Panc1 (cell line): ENCODE measurements at regions of chr17 and their contacts with region 1.

Region 1: GRCh38 chr17:27601069-27601975 is 29.7 kb upstream of the LGALS9 start:
- DNase-seq: peak; percentile 53
- ATAC-seq: no peak
- H3K4me3 ChIP-seq: no peak overlapping the region
- H3K27ac ChIP-seq: no peak overlapping the region
- H3K4me1 ChIP-seq: no peaks in the 10 kb centered on the region
- H3K27me3 ChIP-seq: no peaks in the 10 kb centered on the region
- CTCF ChIP-seq: peak; percentile 92

Region 2: DNA sequence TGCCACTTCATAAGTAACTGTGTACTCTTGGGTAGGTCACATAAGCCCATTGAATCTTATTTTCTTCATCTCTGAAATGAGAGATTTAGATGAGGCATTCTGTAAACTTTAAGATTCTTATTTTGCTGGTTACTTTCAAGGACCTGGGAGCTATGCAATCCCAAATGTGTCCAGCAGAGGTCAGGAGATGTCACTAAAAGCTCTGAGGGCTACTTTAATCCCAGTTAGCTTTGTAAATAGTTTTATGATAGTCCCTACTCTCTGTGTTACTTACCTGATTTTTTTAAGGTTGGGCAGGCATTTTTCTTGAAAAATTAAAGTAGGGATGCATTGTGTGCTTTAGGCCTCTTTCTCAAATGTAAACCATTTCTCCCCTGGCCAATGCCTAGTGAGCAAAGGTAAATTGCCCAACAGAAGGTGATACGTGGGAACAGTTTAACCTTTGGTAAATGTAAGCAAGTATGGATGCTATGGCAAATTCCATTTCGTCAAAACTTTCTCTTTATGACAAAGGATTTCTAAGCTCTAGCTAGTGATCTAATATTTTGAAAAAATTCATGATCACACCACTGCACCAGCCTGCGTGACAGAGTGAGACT is 364.5 kb before region 1 on chr17:
- CTCF ChIA-PET with region 1: interaction called, 20 read pairs
- POLR2A ChIA-PET with region 1: no interaction called
- in situ Hi-C with region 1: no loop called
- intact Hi-C with region 1: no loop called
- DNase-seq: peak; percentile 72
- ATAC-seq: peak; percentile 84
- H3K4me3 ChIP-seq: no peak overlapping the region
- H3K27ac ChIP-seq: no peak overlapping the region
- H3K4me1 ChIP-seq: peaks cover 5% of the 10 kb centered on the region; the same call in 1 of the 2 replicates
- H3K27me3 ChIP-seq: no peaks in the 10 kb centered on the region
- CTCF ChIP-seq: peak; percentile 81; the same call in 1 of the 2 replicates

Region 3: DNA sequence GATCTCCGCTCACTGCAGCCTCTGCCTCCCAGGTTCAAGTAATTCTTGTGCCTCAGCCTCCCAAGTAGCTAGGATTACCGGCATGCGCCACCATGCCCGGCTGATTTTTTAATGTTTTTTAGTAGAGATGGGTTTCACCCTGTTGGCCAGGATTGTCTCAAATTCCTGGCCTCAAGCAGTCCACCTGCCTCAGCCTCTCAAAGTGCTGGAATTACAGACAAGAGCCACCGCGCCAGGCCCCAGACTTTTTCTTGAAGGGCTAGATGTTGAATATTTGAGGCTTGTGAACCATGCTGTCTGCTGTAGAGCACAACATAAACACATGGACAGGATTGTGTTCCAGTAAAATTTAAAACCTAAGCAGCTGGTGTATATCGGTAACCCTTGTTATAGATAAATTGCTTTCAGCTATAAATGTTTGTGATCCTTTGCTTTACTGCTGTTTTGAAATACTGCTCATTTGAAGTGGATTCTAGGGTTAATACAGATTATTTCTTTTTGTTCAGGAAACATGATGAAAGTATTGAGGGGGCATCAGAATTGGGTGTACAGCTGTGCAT is 295.0 kb before region 1 on chr17:
- CTCF ChIA-PET with region 1: no interaction called
- POLR2A ChIA-PET with region 1: no interaction called
- in situ Hi-C with region 1: no loop called
- intact Hi-C with region 1: no loop called
- DNase-seq: no peak
- ATAC-seq: no peak
- H3K4me3 ChIP-seq: no peak overlapping the region
- H3K27ac ChIP-seq: no peak overlapping the region
- H3K4me1 ChIP-seq: 0 out of 2 replicates have a peak, but pooled peaks cover 4% of the 10 kb centered on the region
- H3K27me3 ChIP-seq: no peaks in the 10 kb centered on the region
- CTCF ChIP-seq: no peak

Region 4: DNA sequence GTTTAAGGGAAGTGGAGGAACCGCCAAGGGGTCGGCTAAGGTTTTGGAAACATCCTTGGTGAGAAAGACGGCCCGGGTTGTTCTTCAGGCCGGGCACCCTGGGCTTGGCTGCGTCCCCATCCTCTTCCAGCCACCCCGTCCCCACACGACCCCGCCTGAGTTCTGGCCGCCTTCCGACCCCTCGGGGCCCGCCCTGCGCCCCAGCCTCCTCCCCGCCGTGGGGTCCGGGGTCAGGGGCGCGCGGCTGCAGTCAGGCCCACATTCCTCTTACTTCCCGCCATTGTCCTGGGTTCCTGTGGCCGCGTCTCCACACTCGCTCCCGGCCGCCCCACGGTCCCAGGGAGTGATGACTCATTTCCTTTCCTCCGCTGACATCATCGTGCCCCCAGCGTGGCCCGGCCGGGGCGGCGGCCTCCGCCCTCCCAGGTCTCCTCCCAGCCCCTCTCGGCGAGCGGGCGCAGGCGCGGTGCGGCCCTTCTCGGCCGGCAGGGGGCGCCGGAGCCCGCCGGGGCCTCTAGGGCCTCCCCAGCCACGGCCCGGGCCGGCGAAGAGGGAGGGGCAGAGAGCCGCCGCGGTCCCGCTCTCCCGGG is 247.8 kb before region 1 on chr17:
- CTCF ChIA-PET with region 1: interaction called, 6 read pairs
- POLR2A ChIA-PET with region 1: no interaction called
- in situ Hi-C with region 1: no loop called
- intact Hi-C with region 1: loop called (anchors 1 kb)
- DNase-seq: peak; percentile 61
- ATAC-seq: peak; percentile 92
- H3K4me3 ChIP-seq: peak overlapping the region; percentile 66 to 69
- H3K27ac ChIP-seq: peak overlapping the region; percentile 95
- H3K4me1 ChIP-seq: peaks cover 26% of the 10 kb centered on the region
- H3K27me3 ChIP-seq: no peaks in the 10 kb centered on the region
- CTCF ChIP-seq: peak; percentile 99

Region 5: DNA sequence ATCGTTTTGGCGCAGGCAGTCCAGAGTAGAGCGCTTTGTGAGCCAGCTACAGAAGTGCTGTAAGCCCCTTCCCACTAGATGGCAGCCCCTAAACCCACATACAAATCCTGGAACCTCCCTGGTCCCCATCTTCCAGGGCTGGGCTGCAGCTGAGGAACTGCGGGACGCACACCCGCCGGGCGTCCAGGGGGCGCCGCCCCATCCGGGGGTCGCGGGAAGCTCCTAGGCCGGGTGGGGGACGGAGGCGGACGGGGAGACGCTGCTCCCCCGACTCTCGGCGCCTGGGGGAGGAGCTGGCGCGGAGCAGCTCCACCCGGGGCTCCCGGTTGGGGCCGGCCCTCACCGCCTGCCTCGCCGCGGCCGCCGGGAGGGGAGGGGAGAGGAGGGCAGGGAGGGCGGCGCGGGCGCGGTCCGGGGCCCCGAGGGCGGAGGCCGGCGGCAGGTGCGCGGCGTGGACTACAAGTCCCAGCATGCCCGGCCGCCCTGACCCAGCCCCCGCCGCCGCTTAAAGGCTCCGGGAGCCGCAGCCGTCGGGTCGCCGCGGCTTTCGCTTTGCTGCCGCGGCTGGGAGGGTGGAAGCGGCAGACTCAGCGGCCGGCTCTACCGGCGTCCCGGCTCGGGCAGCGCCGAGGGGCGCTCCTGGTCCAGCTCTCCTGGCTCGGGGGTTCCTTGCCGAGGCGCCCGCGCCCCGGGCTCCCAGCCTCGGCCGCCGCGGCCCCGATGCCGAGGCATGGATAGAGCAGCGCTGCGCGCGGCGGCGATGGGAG is 145.2 kb before region 1 on chr17 and contains the start of gene KSR1:
- CTCF ChIA-PET with region 1: interaction called, 8 read pairs
- POLR2A ChIA-PET with region 1: no interaction called
- in situ Hi-C with region 1: no loop called
- intact Hi-C with region 1: loop called (anchors 5 kb)
- DNase-seq: peak; percentile 30
- ATAC-seq: peak; percentile 94
- H3K4me3 ChIP-seq: peak within 1 kb of the TSS; percentile 65 to 72
- H3K27ac ChIP-seq: peak within 1 kb of the TSS; percentile 52
- H3K4me1 ChIP-seq: peaks cover 31% of the 10 kb centered on the region
- H3K27me3 ChIP-seq: no peaks in the 10 kb centered on the region
- CTCF ChIP-seq: peak; percentile 70
- total RNA-seq, gene KSR1: 21.7 TPM

Region 6: GRCh38 chr17:27494192-27495091 is 106.9 kb before region 1 on chr17:
- CTCF ChIA-PET with region 1: interaction called, 7 read pairs
- POLR2A ChIA-PET with region 1: no interaction called
- in situ Hi-C with region 1: no loop called
- intact Hi-C with region 1: loop called (anchors 10 kb)
- DNase-seq: no peak
- ATAC-seq: peak; percentile 81
- H3K4me3 ChIP-seq: no peak overlapping the region
- H3K27ac ChIP-seq: no peak overlapping the region; the same call in 1 of the 2 replicates
- H3K4me1 ChIP-seq: peaks cover 2% of the 10 kb centered on the region
- H3K27me3 ChIP-seq: no peaks in the 10 kb centered on the region
- CTCF ChIP-seq: no peak

Region 7: GRCh38 chr17:27544350-27545131 is 56.8 kb before region 1 on chr17:
- CTCF ChIA-PET with region 1: no interaction called
- POLR2A ChIA-PET with region 1: no interaction called
- in situ Hi-C with region 1: no loop called
- intact Hi-C with region 1: no loop called
- DNase-seq: no peak
- ATAC-seq: no peak
- H3K4me3 ChIP-seq: no peak overlapping the region
- H3K27ac ChIP-seq: no peak overlapping the region
- H3K4me1 ChIP-seq: peaks cover 20% of the 10 kb centered on the region
- H3K27me3 ChIP-seq: no peaks in the 10 kb centered on the region
- CTCF ChIP-seq: no peak

Region 8: GRCh38 chr17:27578718-27579085 is 22.6 kb before region 1 on chr17:
- CTCF ChIA-PET with region 1: interaction called, 19 read pairs
- POLR2A ChIA-PET with region 1: no interaction called
- in situ Hi-C with region 1: no loop called
- intact Hi-C with region 1: no loop called
- DNase-seq: no peak
- ATAC-seq: peak; percentile 58; the same call in 1 of the 2 replicates
- H3K4me3 ChIP-seq: no peak overlapping the region
- H3K27ac ChIP-seq: no peak overlapping the region
- H3K4me1 ChIP-seq: peaks cover 23% of the 10 kb centered on the region
- H3K27me3 ChIP-seq: no peaks in the 10 kb centered on the region
- CTCF ChIP-seq: no peak

Region 9: GRCh38 chr17:27654654-27655524 is 53.6 kb after region 1 on chr17:
- CTCF ChIA-PET with region 1: interaction called, 3 read pairs
- POLR2A ChIA-PET with region 1: no interaction called
- in situ Hi-C with region 1: no loop called
- intact Hi-C with region 1: loop called (anchors 2 kb)
- DNase-seq: peak; percentile 38
- ATAC-seq: peak; percentile 92
- H3K4me3 ChIP-seq: no peak overlapping the region
- H3K27ac ChIP-seq: no peak overlapping the region
- H3K4me1 ChIP-seq: no peaks in the 10 kb centered on the region
- H3K27me3 ChIP-seq: no peaks in the 10 kb centered on the region
- CTCF ChIP-seq: peak; percentile 98

Region 10: DNA sequence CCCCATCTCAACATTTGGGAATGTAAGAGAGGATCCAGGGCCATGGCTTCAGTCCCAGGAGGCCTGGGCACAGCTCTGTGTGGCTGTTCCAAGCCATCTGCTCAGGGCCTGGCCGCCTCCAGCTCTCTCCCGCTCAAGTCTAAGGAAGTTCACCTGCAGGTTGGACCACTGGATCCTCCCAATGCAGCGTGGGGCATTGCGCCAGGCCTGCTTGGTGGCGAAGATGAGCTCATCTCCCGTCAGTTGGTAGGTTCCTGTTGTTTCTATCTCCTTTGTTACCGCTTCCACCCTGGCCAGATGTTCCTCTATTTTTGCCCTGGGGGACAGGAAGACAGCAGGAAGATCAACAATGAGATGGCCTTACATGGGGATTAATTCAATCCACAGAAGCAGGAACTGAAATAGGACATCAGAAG is 181.5 kb after region 1 on chr17:
- CTCF ChIA-PET with region 1: no interaction called
- POLR2A ChIA-PET with region 1: no interaction called
- in situ Hi-C with region 1: no loop called
- intact Hi-C with region 1: no loop called
- DNase-seq: no peak
- ATAC-seq: no peak
- H3K4me3 ChIP-seq: no peak overlapping the region
- H3K27ac ChIP-seq: no peak overlapping the region
- H3K4me1 ChIP-seq: no peaks in the 10 kb centered on the region
- H3K27me3 ChIP-seq: no peaks in the 10 kb centered on the region
- CTCF ChIP-seq: no peak

Region 11: DNA sequence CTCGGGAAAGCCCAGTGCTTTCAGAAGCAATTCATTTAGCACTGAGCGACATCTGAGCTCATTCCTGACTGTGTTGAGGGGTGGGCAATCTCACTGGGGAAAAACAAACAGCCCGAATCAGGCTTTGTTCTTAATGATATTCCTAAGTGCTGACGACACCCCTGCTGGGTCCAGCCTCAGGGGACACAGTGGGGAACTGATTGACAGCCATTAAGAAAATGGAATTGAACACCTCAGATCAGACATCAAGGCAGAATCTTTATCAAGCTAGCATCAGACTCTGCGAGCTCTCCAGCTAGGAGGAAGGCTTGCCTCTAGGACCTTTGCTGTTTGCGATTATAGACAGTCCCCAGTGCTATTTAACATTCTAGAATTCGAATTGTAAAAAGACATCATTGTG is 314.4 kb after region 1 on chr17:
- CTCF ChIA-PET with region 1: no interaction called
- POLR2A ChIA-PET with region 1: no interaction called
- in situ Hi-C with region 1: no loop called
- intact Hi-C with region 1: no loop called
- DNase-seq: no peak
- ATAC-seq: no peak
- H3K4me3 ChIP-seq: no peak overlapping the region
- H3K27ac ChIP-seq: no peak overlapping the region
- H3K4me1 ChIP-seq: no peaks in the 10 kb centered on the region
- H3K27me3 ChIP-seq: no peaks in the 10 kb centered on the region
- CTCF ChIP-seq: no peak